GM12878 (cell line): ENCODE measurements at regions of chrX and their contacts with region 1.

Region 1: DNA sequence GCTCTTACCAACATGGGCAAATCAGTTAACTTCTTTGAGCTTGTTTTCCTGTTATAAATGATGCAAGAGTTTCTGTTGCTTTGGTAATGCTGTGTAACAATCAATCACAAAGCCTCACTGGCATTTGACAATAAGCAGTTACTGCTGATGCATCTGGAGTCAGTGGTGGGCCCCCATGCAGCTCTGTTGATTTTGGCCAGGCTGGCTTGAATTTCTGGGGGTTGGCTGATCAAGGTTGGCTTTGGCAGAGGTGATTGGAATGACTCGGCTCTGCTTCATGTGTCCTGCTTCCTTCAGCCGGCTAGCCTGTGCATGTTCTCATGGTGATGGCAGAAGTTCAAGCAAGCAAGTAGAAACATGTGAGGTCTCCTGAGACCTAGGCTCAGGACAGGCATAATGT is 90.4 kb downstream of the PHEX start:
- DNase-seq: no peak
- ATAC-seq: peak; percentile 37
- H3K4me3 ChIP-seq: no peak overlapping the region
- H3K27ac ChIP-seq: no peak overlapping the region
- H3K4me1 ChIP-seq: no peaks in the 10 kb centered on the region
- H3K27me3 ChIP-seq: no peaks in the 10 kb centered on the region
- CTCF ChIP-seq: no peak
- EP300 ChIP-seq: no peak
- POLR2A ChIP-seq: no peak
- RAD21 ChIP-seq: no peak

Region 2: DNA sequence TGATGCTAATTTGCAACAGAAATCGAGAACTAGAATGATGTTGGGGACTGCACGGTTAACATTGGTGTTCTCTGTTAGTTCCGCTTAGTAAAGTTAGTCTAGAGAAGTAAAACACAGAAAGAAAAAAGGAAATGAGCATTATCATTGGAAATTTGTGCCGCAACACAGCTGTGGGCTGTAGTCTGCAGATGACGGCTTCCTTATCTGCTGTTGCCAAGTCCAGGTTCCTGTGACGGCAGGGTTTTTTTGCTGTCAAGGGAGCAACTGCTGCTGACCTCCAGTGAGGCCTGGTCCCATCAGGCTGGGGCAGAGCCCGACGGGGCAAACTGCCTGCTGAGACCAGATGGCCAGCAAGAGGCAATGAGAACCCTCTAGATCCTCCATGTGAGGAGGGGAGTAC is 129.2 kb before region 1 on chrX:
- CTCF ChIA-PET with region 1: no interaction called
- POLR2A ChIA-PET with region 1: interaction called, 6 read pairs
- RAD21 ChIA-PET with region 1: interaction called, 7 read pairs
- SMC1A ChIA-PET with region 1: interaction called, 11 read pairs
- in situ Hi-C with region 1: no loop called
- intact Hi-C with region 1: no loop called
- DNase-seq: peak; percentile 30
- ATAC-seq: peak; percentile 36
- H3K4me3 ChIP-seq: no peak overlapping the region
- H3K27ac ChIP-seq: peak overlapping the region; percentile 62
- H3K4me1 ChIP-seq: peaks cover 16% of the 10 kb centered on the region
- H3K27me3 ChIP-seq: no peaks in the 10 kb centered on the region
- CTCF ChIP-seq: no peak
- EP300 ChIP-seq: no peak; a peak in 1 of 4 replicates
- POLR2A ChIP-seq: no peak
- RAD21 ChIP-seq: no peak

Region 3: GRCh38 chrX:23554304-23554703 is 1431.8 kb after region 1 on chrX:
- CTCF ChIA-PET with region 1: no interaction called
- POLR2A ChIA-PET with region 1: no interaction called
- RAD21 ChIA-PET with region 1: no interaction called
- SMC1A ChIA-PET with region 1: no interaction called
- in situ Hi-C with region 1: no loop called
- intact Hi-C with region 1: no loop called
- DNase-seq: no peak
- ATAC-seq: peak; percentile 67
- H3K4me3 ChIP-seq: no peak overlapping the region
- H3K27ac ChIP-seq: no peak overlapping the region
- H3K4me1 ChIP-seq: no peaks in the 10 kb centered on the region
- H3K27me3 ChIP-seq: no peaks in the 10 kb centered on the region
- CTCF ChIP-seq: peak; percentile 47 to 50 (median 49); a peak in 4 of 6 replicates
- EP300 ChIP-seq: no peak
- POLR2A ChIP-seq: no peak
- RAD21 ChIP-seq: peak; percentile 43